ENCODE measurements at regions of chr12 and their contacts with region 1.

Region 1: GRCh38 chr12:66860752-66861750 is 182.2 kb upstream of the GRIP1 start:
- DNase-seq: peak; percentile 17 to 60 (median 36)
- ATAC-seq: no peak
- H3K4me3 ChIP-seq: no peak overlapping the region
- H3K27ac ChIP-seq: no peak overlapping the region
- H3K4me1 ChIP-seq: no peaks in the 10 kb centered on the region
- H3K27me3 ChIP-seq: peaks cover 0 to 3% (median 0%) of the 10 kb centered on the region in 9 donors
- CTCF ChIP-seq: peak; percentile 67 to 92 (median 84)
- POLR2A ChIP-seq: no peak

Region 2: DNA sequence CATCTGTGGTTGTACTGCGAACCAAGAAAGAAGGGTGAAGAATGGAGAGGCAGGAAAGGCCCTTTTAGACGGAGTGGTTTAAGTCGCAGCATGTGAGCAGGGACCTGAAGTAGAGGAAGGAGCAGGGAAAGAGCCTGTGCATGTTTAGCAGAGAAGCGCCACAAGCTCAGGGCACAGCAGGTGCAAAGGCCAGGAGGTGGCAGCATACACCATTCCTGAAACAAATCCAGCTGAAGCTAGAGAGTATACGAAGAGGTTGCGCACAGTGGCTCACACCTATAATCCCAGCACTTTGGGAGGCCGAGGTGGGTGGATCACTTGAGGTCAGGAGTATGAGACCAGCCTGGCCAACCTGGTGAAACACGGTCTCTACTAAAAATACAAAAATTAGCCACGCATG is 508.9 kb before region 1 on chr12:
- intact Hi-C with region 1: loop called in 1 of 10 experiments (anchors 10 kb)
- DNase-seq: peak in 2 of 5 donors; percentile 37 to 53
- ATAC-seq: peak in 1 of 4 donors; percentile 52
- H3K4me3 ChIP-seq: no peak overlapping the region
- H3K27ac ChIP-seq: no peak overlapping the region
- H3K4me1 ChIP-seq: no peaks in the 10 kb centered on the region
- H3K27me3 ChIP-seq: no peaks in the 10 kb centered on the region
- CTCF ChIP-seq: peak in 9 of 12 donors; percentile 10 to 40 (median 24)
- POLR2A ChIP-seq: no peak

Region 3: GRCh38 chr12:66688846-66689439 is 172.1 kb before region 1 on chr12:
- intact Hi-C with region 1: loop called (anchors 2 to 10 kb)
- DNase-seq: peak in 3 of 5 donors; percentile 14 to 29 (median 27)
- ATAC-seq: peak in 3 of 4 donors; percentile 63 to 77 (median 71)
- H3K4me3 ChIP-seq: no peak overlapping the region
- H3K27ac ChIP-seq: no peak overlapping the region
- H3K4me1 ChIP-seq: no peaks in the 10 kb centered on the region
- H3K27me3 ChIP-seq: peaks cover 0 to 4% (median 0%) of the 10 kb centered on the region in 9 donors
- CTCF ChIP-seq: peak; percentile 21 to 59 (median 42)
- POLR2A ChIP-seq: no peak

Region 4: GRCh38 chr12:66739933-66740648 is 121.0 kb before region 1 on chr12:
- intact Hi-C with region 1: no loop called
- DNase-seq: no peak
- ATAC-seq: no peak
- H3K4me3 ChIP-seq: no peak overlapping the region
- H3K27ac ChIP-seq: no peak overlapping the region
- H3K4me1 ChIP-seq: no peaks in the 10 kb centered on the region
- H3K27me3 ChIP-seq: no peaks in the 10 kb centered on the region
- CTCF ChIP-seq: no peak
- POLR2A ChIP-seq: no peak